Mammary epithelial cell (primary cell): ENCODE measurements at regions of chr1 and their contacts with region 1.

Region 1: GRCh38 chr1:107767156-107767582 is 197.8 kb downstream of the VAV3 start:
- DNase-seq: no peak
- H3K4me3 ChIP-seq: no peak overlapping the region
- H3K27ac ChIP-seq: no peak overlapping the region
- H3K4me1 ChIP-seq: no peaks in the 10 kb centered on the region
- H3K27me3 ChIP-seq: no peaks in the 10 kb centered on the region
- CTCF ChIP-seq: no peak

Region 2: DNA sequence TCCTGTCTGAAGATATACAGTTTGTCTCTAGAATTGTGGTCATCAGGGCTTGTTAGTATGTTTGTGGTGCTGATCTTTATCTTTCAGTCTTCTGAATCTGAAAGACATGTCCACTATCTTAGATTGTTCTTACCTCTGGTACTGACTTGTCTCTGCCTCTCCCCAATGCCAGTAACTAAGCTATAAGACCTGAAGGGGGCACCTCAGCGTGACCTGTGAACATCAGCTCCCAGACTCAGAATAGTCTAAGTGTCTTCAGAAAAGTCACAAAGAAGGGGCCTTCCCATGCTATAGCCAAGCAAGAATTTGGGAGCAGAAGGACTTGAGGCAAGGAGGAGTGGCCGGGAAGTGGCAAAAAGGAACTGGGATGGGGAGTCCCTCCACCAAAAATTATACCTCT is 448.2 kb before region 1 on chr1:
- CTCF ChIA-PET with region 1: interaction called, 25 read pairs
- dilution Hi-C with region 1: no loop called
- in situ Hi-C with region 1: no loop called
- intact Hi-C with region 1: no loop called
- DNase-seq: no peak
- H3K4me3 ChIP-seq: no peak overlapping the region
- H3K27ac ChIP-seq: no peak overlapping the region
- H3K4me1 ChIP-seq: no peaks in the 10 kb centered on the region
- H3K27me3 ChIP-seq: no peaks in the 10 kb centered on the region
- CTCF ChIP-seq: no peak